A549 (cell line): ENCODE measurements at regions of chr10 and their contacts with region 1.

Region 1: GRCh38 chr10:26269754-26270153 is 53.2 kb downstream of the GAD2 start:
- DNase-seq: peak; percentile 43 to 65
- ATAC-seq: peak; percentile 95
- H3K4me3 ChIP-seq: no peak overlapping the region
- H3K27ac ChIP-seq: no peak overlapping the region
- H3K4me1 ChIP-seq: no peaks in the 10 kb centered on the region
- CTCF ChIP-seq: peak; percentile 55
- EP300 ChIP-seq: no peak
- POLR2A ChIP-seq: no peak
- RAD21 ChIP-seq: peak; percentile 63 to 66

Region 2: DNA sequence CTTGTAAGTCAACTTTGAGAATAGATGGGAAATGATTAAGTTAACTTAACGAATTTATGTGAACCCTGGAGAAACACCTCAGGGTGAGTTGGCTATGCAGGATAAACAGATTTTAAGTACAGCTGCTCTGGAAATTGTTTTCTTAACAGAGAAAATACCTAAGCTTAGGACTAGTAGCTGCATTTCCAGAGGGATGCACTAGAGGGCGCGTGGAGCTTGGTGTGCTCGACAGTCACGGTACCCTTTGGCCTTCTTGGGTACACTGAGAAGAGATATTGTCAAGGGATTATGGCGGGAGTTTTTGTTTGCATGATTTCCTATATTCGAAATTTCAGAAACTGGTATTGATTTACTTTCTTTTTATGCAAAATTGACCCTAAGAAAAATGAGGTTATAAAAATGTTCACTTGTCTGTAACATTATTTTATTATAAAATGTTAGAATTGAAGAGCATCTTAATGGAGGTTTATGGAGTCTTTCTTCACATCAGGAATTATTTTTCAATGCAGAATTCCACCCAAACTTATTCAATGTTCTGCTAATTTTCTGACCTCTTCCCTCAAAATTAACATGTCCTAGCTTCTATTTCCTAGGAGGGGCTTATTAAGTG is 394.1 kb before region 1 on chr10:
- CTCF ChIA-PET with region 1: interaction called, 45 read pairs
- POLR2A ChIA-PET with region 1: no interaction called
- DNase-seq: peak; percentile 30 to 77
- ATAC-seq: peak; percentile 85 to 87
- H3K4me3 ChIP-seq: no peak overlapping the region
- H3K27ac ChIP-seq: no peak overlapping the region
- H3K4me1 ChIP-seq: no peaks in the 10 kb centered on the region
- CTCF ChIP-seq: peak; percentile 82
- EP300 ChIP-seq: no peak
- POLR2A ChIP-seq: no peak
- RAD21 ChIP-seq: peak; percentile 72 to 76

Region 3: DNA sequence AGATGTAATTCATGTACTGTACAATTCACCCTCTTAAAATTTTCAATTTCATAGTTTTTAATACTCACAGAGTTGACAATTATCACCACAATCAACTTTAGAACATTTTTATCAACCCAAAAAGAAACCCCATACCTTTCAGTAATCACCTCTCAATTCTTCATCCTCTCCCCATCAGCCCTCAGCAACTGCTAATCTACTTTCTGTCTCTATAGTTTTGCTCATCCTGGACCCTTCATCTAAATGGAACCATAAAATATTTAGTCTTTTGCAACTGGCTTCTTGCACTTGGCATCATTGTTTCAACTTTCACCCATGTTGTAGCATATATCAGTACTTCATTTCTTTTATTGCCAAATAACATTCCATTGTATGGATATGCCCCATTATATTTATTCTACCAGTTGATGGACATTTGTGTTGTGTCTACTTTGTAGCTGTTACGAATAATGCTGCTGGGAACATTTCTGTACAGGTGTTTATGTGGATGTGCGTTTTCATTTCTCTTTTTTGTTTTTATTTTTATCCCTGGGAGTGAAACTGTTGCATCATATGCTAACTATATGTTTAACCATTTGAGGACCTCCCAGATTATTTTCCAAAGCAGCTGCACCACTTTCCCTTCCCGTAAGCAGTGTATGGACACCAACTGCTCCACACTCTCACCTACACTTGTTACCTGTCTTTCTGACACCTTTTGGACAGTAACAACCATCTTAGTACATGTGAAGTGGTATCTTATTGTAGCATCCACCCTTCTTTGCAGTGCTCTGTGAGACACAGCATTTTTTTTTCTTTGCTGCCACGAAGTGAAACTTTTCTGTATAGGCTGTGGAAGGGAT is 103.0 kb after region 1 on chr10:
- CTCF ChIA-PET with region 1: no interaction called
- POLR2A ChIA-PET with region 1: no interaction called
- DNase-seq: no peak
- ATAC-seq: no peak
- H3K4me3 ChIP-seq: no peak overlapping the region
- H3K27ac ChIP-seq: peak overlapping the region in 1 of 2 experiments; percentile 63; a peak in 2 of 6 replicates
- H3K4me1 ChIP-seq: 0 out of 3 replicates have a peak, but pooled peaks cover 1% of the 10 kb centered on the region
- CTCF ChIP-seq: no peak
- EP300 ChIP-seq: no peak
- POLR2A ChIP-seq: no peak
- RAD21 ChIP-seq: no peak